ENCODE measurements at regions of chr7 and their contacts with region 1.

Region 1: GRCh38 chr7:134458806-134459698 is at the start of gene AKR1B1:
- DNase-seq: peak; percentile 89
- H3K4me3 ChIP-seq: peak within 1 kb of the TSS; percentile 42 to 81 (median 57)
- H3K27ac ChIP-seq: peak within 1 kb of the TSS; percentile 5
- H3K4me1 ChIP-seq: peaks cover 20% of the 10 kb centered on the region
- H3K27me3 ChIP-seq: no peaks in the 10 kb centered on the region
- CTCF ChIP-seq: peak; percentile 71 to 72
- POLR2A ChIP-seq: no peak
- total RNA-seq, gene AKR1B1: 159 and 160 TPM in 2 replicates

Region 2: DNA sequence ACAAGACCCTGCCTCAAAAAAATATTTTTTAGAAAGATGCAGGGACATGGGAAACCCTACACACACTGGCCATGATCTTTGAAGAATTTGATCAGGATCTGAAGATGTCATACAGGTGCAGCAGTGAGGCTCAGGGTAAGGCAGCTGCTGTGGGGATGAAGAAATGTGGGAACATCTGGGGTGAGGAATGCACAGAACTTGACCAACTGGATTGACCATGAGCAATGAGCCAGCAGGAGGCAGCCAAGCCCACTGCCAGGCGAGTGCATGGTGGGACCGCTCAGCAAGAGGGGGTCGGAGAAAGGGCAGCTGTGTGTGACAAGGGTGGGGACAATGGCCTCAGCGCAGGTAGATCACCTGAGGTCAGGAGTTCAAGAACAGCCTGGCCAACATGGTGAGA is 55.4 kb before region 1 on chr7:
- CTCF ChIA-PET with region 1: no interaction called
- POLR2A ChIA-PET with region 1: no interaction called
- dilution Hi-C with region 1: no loop called
- intact Hi-C with region 1: no loop called
- DNase-seq: no peak
- H3K4me3 ChIP-seq: no peak overlapping the region
- H3K27ac ChIP-seq: no peak overlapping the region
- H3K4me1 ChIP-seq: no peaks in the 10 kb centered on the region
- H3K27me3 ChIP-seq: peaks cover 11 to 18% of the 10 kb centered on the region in 2 experiments
- CTCF ChIP-seq: no peak
- POLR2A ChIP-seq: no peak

Region 3: GRCh38 chr7:134448700-134449229 is 10.3 kb before region 1 on chr7:
- CTCF ChIA-PET with region 1: interaction called, 17 read pairs
- POLR2A ChIA-PET with region 1: no interaction called
- dilution Hi-C with region 1: no loop called
- intact Hi-C with region 1: no loop called
- DNase-seq: peak; percentile 64
- H3K4me3 ChIP-seq: no peak overlapping the region
- H3K27ac ChIP-seq: peak overlapping the region; percentile 86
- H3K4me1 ChIP-seq: peaks cover 22% of the 10 kb centered on the region
- H3K27me3 ChIP-seq: no peaks in the 10 kb centered on the region
- CTCF ChIP-seq: no peak
- POLR2A ChIP-seq: no peak

Region 4: DNA sequence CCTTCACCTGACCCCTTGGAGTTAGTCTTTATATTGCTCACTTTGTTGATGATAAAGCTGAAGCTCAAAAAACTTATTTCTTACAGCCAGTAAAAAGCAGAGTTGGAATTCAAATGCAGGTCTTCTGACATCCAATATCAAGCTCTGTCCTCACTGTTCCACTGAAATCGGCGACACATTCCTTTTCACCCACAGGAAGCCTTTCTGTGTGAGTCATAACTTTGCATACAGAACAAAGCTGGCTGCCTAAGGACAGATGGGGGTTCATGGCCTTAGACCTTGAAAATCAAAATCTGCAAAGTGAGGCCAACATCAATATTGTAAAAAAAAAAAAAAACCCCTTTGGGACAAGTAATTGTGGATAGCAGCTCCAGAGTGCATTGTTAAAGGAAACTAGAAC is 21.7 kb after region 1 on chr7:
- CTCF ChIA-PET with region 1: interaction called, 46 read pairs
- POLR2A ChIA-PET with region 1: no interaction called
- dilution Hi-C with region 1: no loop called
- intact Hi-C with region 1: loop called (anchors 2 kb)
- DNase-seq: peak; percentile 71
- H3K4me3 ChIP-seq: no peak overlapping the region
- H3K27ac ChIP-seq: peak overlapping the region; percentile 9
- H3K4me1 ChIP-seq: peaks cover 16% of the 10 kb centered on the region
- H3K27me3 ChIP-seq: no peaks in the 10 kb centered on the region
- CTCF ChIP-seq: no peak
- POLR2A ChIP-seq: no peak

Region 5: GRCh38 chr7:134502463-134503371 is 43.7 kb after region 1 on chr7:
- CTCF ChIA-PET with region 1: interaction called, 5 read pairs
- POLR2A ChIA-PET with region 1: no interaction called
- dilution Hi-C with region 1: no loop called
- intact Hi-C with region 1: loop called (anchors 2 kb)
- DNase-seq: no peak
- H3K4me3 ChIP-seq: no peak overlapping the region
- H3K27ac ChIP-seq: no peak overlapping the region
- H3K4me1 ChIP-seq: peaks cover 13% of the 10 kb centered on the region
- H3K27me3 ChIP-seq: no peaks in the 10 kb centered on the region
- CTCF ChIP-seq: no peak
- POLR2A ChIP-seq: no peak

Measured in endothelial cell of umbilical vein (primary cell).